ENCODE measurements at regions of chr12 and their contacts with region 1.

Region 1: GRCh38 chr12:120327593-120327992 is at the start of gene PLA2G1B:
- DNase-seq: no peak
- H3K4me3 Mint-ChIP-seq: no peak within 1 kb of the TSS
- H3K27ac Mint-ChIP-seq: no peak within 1 kb of the TSS
- H3K4me1 Mint-ChIP-seq: no peaks in the 10 kb centered on the region
- H3K27me3 Mint-ChIP-seq: peaks cover 3% of the 10 kb centered on the region
- total RNA-seq, gene PLA2G1B: not detected

Region 2: GRCh38 chr12:120093592-120094355 is 233.8 kb before region 1 on chr12:
- CTCF ChIA-PET with region 1: no interaction called
- intact Hi-C with region 1: no loop called
- DNase-seq: no peak
- H3K4me3 Mint-ChIP-seq: no peak overlapping the region
- H3K27ac Mint-ChIP-seq: peak overlapping the region; percentile 66
- H3K4me1 Mint-ChIP-seq: peaks cover 4% of the 10 kb centered on the region
- H3K27me3 Mint-ChIP-seq: no peaks in the 10 kb centered on the region

Region 3: GRCh38 chr12:120317224-120318105 is 10.1 kb before region 1 on chr12:
- CTCF ChIA-PET with region 1: no interaction called
- intact Hi-C with region 1: loop called (anchors 1 kb)
- DNase-seq: peak; percentile 100
- H3K4me3 Mint-ChIP-seq: peak overlapping the region; percentile 87
- H3K27ac Mint-ChIP-seq: peak overlapping the region; percentile 88
- H3K4me1 Mint-ChIP-seq: peaks cover 11% of the 10 kb centered on the region
- H3K27me3 Mint-ChIP-seq: no peaks in the 10 kb centered on the region

Region 4: GRCh38 chr12:120356567-120357030 is 29.0 kb after region 1 on chr12:
- CTCF ChIA-PET with region 1: interaction called, 3 read pairs
- intact Hi-C with region 1: loop called (anchors 2 kb)
- DNase-seq: peak; percentile 84
- H3K4me3 Mint-ChIP-seq: no peak overlapping the region
- H3K27ac Mint-ChIP-seq: no peak overlapping the region
- H3K4me1 Mint-ChIP-seq: peaks cover under 1% of the 10 kb centered on the region
- H3K27me3 Mint-ChIP-seq: peaks cover 15% of the 10 kb centered on the region

Region 5: GRCh38 chr12:120428597-120429229 is 101.1 kb after region 1 on chr12:
- CTCF ChIA-PET with region 1: interaction called, 14 read pairs
- intact Hi-C with region 1: loop called (anchors 1 kb)
- DNase-seq: no peak
- H3K4me3 Mint-ChIP-seq: no peak overlapping the region
- H3K27ac Mint-ChIP-seq: no peak overlapping the region
- H3K4me1 Mint-ChIP-seq: peaks cover 3% of the 10 kb centered on the region
- H3K27me3 Mint-ChIP-seq: no peaks in the 10 kb centered on the region

Region 6: GRCh38 chr12:120469450-120470149 is 142.0 kb after region 1 on chr12 and contains the start of gene SRSF9:
- CTCF ChIA-PET with region 1: interaction called, 3 read pairs
- intact Hi-C with region 1: loop called (anchors 1 kb)
- DNase-seq: peak; percentile 96
- H3K4me3 Mint-ChIP-seq: peak within 1 kb of the TSS; percentile 90
- H3K27ac Mint-ChIP-seq: peak within 1 kb of the TSS; percentile 87
- H3K4me1 Mint-ChIP-seq: peaks cover 37% of the 10 kb centered on the region
- H3K27me3 Mint-ChIP-seq: no peaks in the 10 kb centered on the region
- total RNA-seq, gene SRSF9: 164 to 171 TPM

Region 7: DNA sequence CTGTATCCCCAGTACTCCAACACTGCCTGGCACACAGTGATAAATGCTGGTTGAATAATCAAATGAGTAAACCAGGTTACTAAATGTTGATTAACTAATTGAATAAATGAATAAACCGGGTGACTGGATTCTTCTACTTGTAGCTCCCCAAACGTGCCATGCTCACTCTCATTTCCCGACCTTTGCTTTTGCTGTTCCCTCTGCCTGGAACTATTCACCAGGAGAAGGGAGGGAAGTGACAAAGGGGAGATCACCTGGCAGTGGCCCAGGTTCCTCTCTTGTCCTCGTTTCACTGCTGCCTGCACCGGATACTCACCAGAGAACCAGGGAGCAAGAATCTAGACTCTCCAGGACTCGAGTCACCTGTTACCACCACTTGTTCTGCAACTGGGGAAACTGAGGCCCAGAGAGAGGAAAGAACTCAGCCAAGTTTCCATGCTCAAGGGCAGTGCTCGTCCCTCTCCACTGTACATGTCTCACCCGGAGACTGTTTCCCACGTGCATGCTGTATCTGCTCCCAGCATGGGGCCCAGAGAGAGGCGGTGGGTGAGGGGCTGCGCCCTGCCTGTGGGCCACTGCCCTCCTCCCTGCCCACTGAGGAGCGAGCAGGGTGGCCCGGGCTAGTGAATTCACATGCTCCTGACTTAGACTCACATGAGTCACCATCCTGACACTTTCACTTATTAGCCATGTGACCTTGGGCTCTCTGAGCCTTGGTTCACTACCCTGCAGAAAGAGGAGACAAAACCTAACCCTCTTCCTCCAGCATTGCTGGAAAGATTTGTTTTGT is 271.3 kb after region 1 on chr12:
- CTCF ChIA-PET with region 1: no interaction called
- intact Hi-C with region 1: no loop called
- DNase-seq: no peak
- H3K4me3 Mint-ChIP-seq: no peak overlapping the region
- H3K27ac Mint-ChIP-seq: no peak overlapping the region
- H3K4me1 Mint-ChIP-seq: no peaks in the 10 kb centered on the region
- H3K27me3 Mint-ChIP-seq: peaks cover 2% of the 10 kb centered on the region

Region 8: GRCh38 chr12:120710031-120710804 is 382.6 kb after region 1 on chr12 and contains the start of gene UNC119B:
- CTCF ChIA-PET with region 1: no interaction called
- intact Hi-C with region 1: loop called (anchors 5 kb)
- DNase-seq: peak; percentile 73
- H3K4me3 Mint-ChIP-seq: peak within 1 kb of the TSS; percentile 85
- H3K27ac Mint-ChIP-seq: peak within 1 kb of the TSS; percentile 84
- H3K4me1 Mint-ChIP-seq: peaks cover 32% of the 10 kb centered on the region
- H3K27me3 Mint-ChIP-seq: no peaks in the 10 kb centered on the region
- total RNA-seq, gene UNC119B: 31.9 to 32.6 TPM